GM12878 (cell line): ENCODE measurements at regions of chr2 and their contacts with region 1.

Region 1: DNA sequence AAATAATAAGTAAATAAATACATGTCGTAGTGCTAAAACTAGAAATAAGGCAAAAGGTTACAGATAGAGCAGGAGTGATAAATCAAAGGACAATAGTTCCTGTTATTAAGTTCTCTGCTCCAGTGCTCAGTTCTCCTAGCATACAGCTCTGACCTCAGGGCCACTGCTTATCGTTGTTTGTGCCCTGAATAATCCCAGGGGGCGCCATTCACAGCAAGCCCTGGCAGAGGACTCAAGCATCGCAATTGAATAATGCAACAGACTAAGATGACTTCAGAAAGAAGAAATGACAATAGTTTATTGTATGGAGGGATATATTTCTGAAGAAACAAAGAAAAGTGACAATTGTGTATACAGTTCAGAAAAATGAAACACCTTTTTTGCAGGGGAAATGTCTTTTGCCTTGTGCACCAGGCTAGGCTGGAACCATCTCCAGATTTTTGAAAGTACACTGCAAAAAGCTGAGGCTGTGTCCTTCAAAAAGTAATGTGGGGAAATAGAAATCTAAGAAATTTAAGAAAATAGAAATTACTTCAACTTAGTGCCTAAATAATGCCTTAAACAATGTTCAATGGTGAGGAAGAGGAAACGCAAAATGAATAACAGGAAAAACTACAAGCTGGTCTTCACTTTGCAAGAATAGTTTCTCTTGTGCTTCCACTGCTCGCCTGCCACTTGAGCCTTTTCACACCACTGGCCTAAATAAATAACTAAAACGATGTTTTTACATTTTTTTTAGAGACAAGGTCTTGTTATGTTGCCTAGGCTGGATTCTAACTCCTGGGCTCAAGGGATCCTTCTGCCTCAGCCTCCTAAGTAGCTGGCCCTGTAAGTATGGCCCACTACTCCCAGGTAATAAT is 19.0 kb upstream of the CCNYL1 start:
- DNase-seq: no peak
- ATAC-seq: peak; percentile 85
- H3K4me3 ChIP-seq: no peak overlapping the region
- H3K27ac ChIP-seq: no peak overlapping the region
- H3K4me1 ChIP-seq: no peaks in the 10 kb centered on the region
- H3K27me3 ChIP-seq: no peaks in the 10 kb centered on the region
- CTCF ChIP-seq: peak; percentile 40 to 63 (median 60)
- EP300 ChIP-seq: no peak
- POLR2A ChIP-seq: no peak
- RAD21 ChIP-seq: peak; percentile 51

Region 2: DNA sequence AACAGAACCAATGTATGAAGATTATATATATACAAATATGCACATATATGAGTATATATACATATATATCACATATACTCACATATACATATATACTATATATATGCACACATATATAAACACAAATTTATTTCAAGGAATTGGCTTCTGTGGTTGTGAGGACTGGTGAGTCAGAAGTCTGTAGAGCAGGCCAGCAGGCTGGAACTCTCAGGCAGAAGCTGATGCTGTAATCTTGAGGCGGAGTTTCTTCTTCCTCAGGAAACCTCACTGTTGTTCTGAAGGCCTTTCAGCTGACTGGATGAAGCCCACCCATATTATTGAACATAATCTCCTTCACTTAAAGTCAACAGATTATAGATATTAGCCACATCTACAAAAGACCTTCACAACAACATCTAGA is 306.5 kb before region 1 on chr2:
- CTCF ChIA-PET with region 1: no interaction called
- POLR2A ChIA-PET with region 1: no interaction called
- RAD21 ChIA-PET with region 1: no interaction called
- SMC1A ChIA-PET with region 1: no interaction called
- in situ Hi-C with region 1: no loop called
- intact Hi-C with region 1: no loop called
- DNase-seq: no peak
- ATAC-seq: no peak
- H3K4me3 ChIP-seq: no peak overlapping the region
- H3K27ac ChIP-seq: no peak overlapping the region
- H3K4me1 ChIP-seq: no peaks in the 10 kb centered on the region
- H3K27me3 ChIP-seq: no peaks in the 10 kb centered on the region; a peak in 1 of 4 replicates
- CTCF ChIP-seq: no peak
- EP300 ChIP-seq: no peak
- POLR2A ChIP-seq: no peak
- RAD21 ChIP-seq: no peak

Region 3: GRCh38 chr2:207710814-207711740 is 18.6 kb after region 1 on chr2 and contains the start of gene CCNYL1:
- CTCF ChIA-PET with region 1: interaction called, 50 read pairs
- POLR2A ChIA-PET with region 1: interaction called, 4 read pairs
- RAD21 ChIA-PET with region 1: no interaction called
- SMC1A ChIA-PET with region 1: interaction called, 3 read pairs
- in situ Hi-C with region 1: no loop called
- intact Hi-C with region 1: no loop called
- DNase-seq: peak; percentile 93
- ATAC-seq: peak; percentile 99
- H3K4me3 ChIP-seq: peak within 1 kb of the TSS; percentile 96
- H3K27ac ChIP-seq: peak within 1 kb of the TSS; percentile 75
- H3K4me1 ChIP-seq: no peaks in the 10 kb centered on the region
- H3K27me3 ChIP-seq: no peaks in the 10 kb centered on the region
- CTCF ChIP-seq: no peak
- EP300 ChIP-seq: no peak
- POLR2A ChIP-seq: peak; percentile 87
- RAD21 ChIP-seq: no peak
- polyA plus RNA-seq, gene CCNYL1: 2.4 to 3.7 TPM

Region 4: DNA sequence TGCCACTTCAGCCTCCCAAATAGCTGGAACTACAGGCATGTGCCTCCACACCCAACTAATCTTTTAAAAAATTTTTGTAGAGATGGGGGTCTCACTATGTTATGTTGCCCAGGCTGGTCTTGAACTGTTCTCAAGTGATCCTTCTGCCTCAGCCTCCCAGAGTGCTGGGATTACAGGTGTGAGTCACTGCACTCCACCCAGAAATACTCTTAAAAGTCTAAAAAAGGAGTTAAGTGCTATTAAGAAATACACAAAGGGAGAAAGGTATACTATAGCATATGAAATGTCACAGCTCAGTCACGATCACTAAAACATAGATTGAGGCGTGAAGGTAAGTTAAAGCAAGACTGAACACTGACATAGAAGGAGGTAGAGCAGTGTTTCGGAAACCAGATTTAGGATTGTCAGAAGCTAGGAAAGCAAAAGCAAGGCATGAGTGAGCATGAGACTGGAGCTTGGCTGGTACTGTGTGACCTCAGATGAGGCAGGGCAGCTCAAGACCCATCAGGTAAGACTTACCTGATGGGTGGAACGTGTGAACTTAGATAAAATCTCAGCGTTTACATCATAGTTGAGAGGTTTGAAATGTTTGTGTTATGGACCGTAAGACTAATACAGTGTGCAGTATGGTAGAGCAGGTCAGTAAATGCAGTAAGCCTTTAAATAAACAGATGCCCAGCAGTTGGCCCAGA is 28.2 kb after region 1 on chr2:
- CTCF ChIA-PET with region 1: interaction called, 15 read pairs
- POLR2A ChIA-PET with region 1: interaction called, 4 read pairs
- RAD21 ChIA-PET with region 1: interaction called, 3 read pairs
- SMC1A ChIA-PET with region 1: interaction called, 4 read pairs
- in situ Hi-C with region 1: no loop called
- intact Hi-C with region 1: no loop called
- DNase-seq: no peak
- ATAC-seq: peak; percentile 4; the same call in 2 of the 3 replicates
- H3K4me3 ChIP-seq: no peak overlapping the region
- H3K27ac ChIP-seq: no peak overlapping the region
- H3K4me1 ChIP-seq: peaks cover 3% of the 10 kb centered on the region; the same call in 1 of the 2 replicates
- H3K27me3 ChIP-seq: no peaks in the 10 kb centered on the region
- CTCF ChIP-seq: no peak
- EP300 ChIP-seq: no peak
- POLR2A ChIP-seq: no peak
- RAD21 ChIP-seq: no peak

Region 5: GRCh38 chr2:207725873-207726578 is 33.6 kb after region 1 on chr2:
- CTCF ChIA-PET with region 1: interaction called, 15 read pairs
- POLR2A ChIA-PET with region 1: interaction called, 3 read pairs
- RAD21 ChIA-PET with region 1: interaction called, 3 read pairs
- SMC1A ChIA-PET with region 1: interaction called, 4 read pairs
- in situ Hi-C with region 1: no loop called
- intact Hi-C with region 1: no loop called
- DNase-seq: no peak
- ATAC-seq: 0 out of 3 replicates have a peak, but pooled peaks have one; percentile 14
- H3K4me3 ChIP-seq: no peak overlapping the region
- H3K27ac ChIP-seq: no peak overlapping the region
- H3K4me1 ChIP-seq: peaks cover 3% of the 10 kb centered on the region; the same call in 1 of the 2 replicates
- H3K27me3 ChIP-seq: no peaks in the 10 kb centered on the region
- CTCF ChIP-seq: no peak
- EP300 ChIP-seq: no peak
- POLR2A ChIP-seq: no peak
- RAD21 ChIP-seq: no peak

Region 6: GRCh38 chr2:207734264-207734635 is 41.8 kb after region 1 on chr2:
- CTCF ChIA-PET with region 1: interaction called, 23 read pairs
- POLR2A ChIA-PET with region 1: no interaction called
- RAD21 ChIA-PET with region 1: interaction called, 3 read pairs
- SMC1A ChIA-PET with region 1: interaction called, 5 read pairs
- in situ Hi-C with region 1: no loop called
- intact Hi-C with region 1: loop called (anchors 1 kb)
- DNase-seq: no peak
- ATAC-seq: peak; percentile 55
- H3K4me3 ChIP-seq: no peak overlapping the region
- H3K27ac ChIP-seq: no peak overlapping the region
- H3K4me1 ChIP-seq: no peaks in the 10 kb centered on the region
- H3K27me3 ChIP-seq: no peaks in the 10 kb centered on the region
- CTCF ChIP-seq: peak; percentile 42 to 58 (median 46); a peak in 4 of 6 replicates
- EP300 ChIP-seq: no peak
- POLR2A ChIP-seq: no peak
- RAD21 ChIP-seq: peak; percentile 58